ENCODE measurements at regions of chr15 and their contacts with region 1.

Region 1: DNA sequence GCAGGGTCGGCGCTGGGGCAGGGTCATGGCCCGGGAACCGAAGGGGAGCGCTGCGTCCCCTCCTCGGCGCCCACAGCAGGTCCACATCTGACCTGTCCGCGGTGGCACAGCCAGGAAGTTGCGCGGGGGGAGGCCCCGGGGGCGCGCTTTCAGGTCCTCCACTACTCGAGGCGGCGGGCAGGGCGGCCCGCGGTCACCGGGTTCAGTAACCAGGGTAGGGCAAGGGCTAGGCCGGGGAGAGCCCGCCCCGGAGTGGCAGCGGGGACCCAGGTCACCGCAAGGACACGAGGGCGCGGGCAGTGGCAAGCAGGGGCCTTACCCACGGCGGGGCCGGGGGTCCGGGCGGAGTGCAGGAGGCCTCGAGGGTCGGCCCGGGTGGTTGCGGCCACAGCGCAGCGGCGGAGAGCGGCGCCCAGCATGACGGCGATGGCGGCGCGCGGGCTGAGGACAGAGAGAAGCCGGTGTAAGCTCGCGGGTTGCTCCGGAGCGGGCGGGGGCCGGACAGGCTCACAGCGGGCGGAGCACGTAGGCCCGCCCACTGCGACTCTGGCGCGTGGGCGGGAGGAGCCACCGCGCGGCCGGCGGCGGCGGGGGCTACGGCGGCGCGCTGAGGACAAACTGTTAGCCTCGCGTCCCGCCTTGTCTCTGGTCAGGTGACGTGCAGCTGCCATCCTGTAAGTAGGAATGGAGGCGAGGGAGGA is at the start of gene COX5A:
- DNase-seq: peak; percentile 97
- ATAC-seq: peak; percentile 95
- H3K4me3 ChIP-seq: peak within 1 kb of the TSS; percentile 81 to 92 (median 85)
- H3K4me3 Mint-ChIP-seq: peak within 1 kb of the TSS; percentile 97
- H3K27ac ChIP-seq: peak within 1 kb of the TSS; percentile 67 to 89
- H3K27ac Mint-ChIP-seq: peak within 1 kb of the TSS; percentile 95
- H3K4me1 ChIP-seq: peaks cover 9 to 13% of the 10 kb centered on the region in 2 donors
- H3K4me1 Mint-ChIP-seq: peaks cover 24% of the 10 kb centered on the region
- H3K27me3 ChIP-seq: no peaks in the 10 kb centered on the region
- H3K27me3 Mint-ChIP-seq: no peaks in the 10 kb centered on the region
- CTCF ChIP-seq: no peak
- total RNA-seq, gene COX5A: 53.3 and 63.9 TPM in 2 replicates

Region 2: DNA sequence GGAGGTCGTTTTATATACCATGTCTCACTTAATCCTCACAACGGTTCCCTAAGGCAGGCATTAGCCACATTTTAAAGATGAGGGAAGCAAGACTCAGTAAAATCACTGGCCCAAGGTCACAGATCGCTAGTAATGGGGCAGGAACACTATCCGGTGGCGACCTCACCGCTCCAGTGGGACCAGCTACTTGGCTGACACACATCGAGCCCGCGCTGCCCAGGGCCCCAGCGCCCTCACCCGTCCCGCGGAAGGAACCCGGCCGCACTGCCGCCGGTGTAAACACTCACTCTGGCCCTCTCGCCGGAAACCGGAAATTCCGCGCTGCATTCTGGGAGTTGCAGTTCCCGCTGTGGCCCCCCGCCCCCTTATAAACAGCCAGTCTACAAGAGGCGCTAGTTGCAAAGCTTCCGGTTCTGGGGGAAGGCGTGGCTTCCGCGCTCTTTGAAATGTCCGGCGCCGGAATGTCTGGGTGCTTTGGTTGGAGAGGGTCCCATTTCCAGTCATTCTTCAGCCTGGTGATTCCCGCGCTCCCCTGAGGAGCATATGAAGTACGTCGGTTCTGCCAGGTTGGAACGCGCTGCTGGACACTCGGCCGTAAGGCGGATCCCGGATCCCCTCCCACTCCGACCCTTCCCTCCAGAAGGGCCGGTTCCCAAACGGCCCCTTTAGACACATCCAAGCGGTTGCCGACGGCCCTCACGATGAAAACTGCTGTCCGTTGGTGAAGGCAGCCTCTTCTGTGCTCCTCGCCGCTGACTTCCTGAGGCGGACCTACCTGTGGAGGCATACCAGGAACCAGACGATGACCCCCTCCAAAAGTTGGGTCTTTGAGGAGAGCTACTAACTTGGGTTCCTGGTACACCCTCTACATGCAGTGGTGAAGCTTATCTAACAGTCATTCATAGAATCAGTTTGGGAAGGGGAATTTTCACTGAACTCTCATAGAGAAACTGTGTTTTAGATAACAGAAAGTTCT is 476.6 kb before region 1 on chr15 and contains the start of gene UBL7:
- CTCF ChIA-PET with region 1: no interaction called
- POLR2A ChIA-PET with region 1: no interaction called
- intact Hi-C with region 1: loop called (anchors 2 kb)
- DNase-seq: peak; percentile 96
- ATAC-seq: peak; percentile 95
- H3K4me3 ChIP-seq: peak within 1 kb of the TSS; percentile 78 to 99 (median 90)
- H3K4me3 Mint-ChIP-seq: peak within 1 kb of the TSS; percentile 92
- H3K27ac ChIP-seq: peak within 1 kb of the TSS; percentile 77 to 80
- H3K27ac Mint-ChIP-seq: peak within 1 kb of the TSS; percentile 76
- H3K4me1 ChIP-seq: peaks cover 30 to 40% of the 10 kb centered on the region in 2 donors
- H3K4me1 Mint-ChIP-seq: peaks cover 39% of the 10 kb centered on the region
- H3K27me3 ChIP-seq: no peaks in the 10 kb centered on the region
- H3K27me3 Mint-ChIP-seq: no peaks in the 10 kb centered on the region
- CTCF ChIP-seq: no peak
- total RNA-seq, gene UBL7: 44.4 and 50.1 TPM in 2 replicates

Region 3: DNA sequence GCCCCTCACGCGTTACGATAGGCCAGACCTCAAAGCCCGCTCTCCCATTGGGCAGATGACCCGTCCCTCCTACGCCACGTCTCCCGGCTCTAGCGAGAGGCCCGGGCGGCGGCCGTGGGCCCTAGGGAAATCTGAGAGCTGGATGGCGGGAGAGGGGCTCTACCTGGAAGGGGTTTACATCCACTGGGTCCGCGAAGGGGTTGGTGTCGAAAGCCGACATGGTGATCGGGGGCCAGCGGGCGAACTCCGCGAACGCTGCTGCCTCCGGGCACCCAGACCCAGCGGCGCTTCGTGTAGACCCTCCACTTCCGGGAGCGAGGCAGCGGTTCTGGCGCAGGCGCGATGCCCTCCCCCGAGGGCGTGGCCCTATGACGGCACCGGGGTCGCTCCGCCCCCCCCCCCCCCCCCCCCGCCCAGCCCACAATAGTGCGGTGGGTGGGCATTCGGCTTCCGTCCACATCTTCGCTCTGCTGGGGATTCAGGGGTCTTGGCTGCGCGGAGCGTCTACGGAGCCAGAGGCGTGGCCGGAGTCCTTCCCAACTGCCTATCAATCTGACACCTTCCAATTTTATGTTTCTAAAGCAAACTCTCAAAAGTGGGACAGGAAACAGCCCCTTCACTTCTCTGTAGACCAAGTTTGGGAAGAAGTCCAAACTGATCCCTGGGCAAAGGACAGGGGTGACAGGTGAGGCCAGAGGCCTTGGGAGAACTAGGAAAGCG is 64.5 kb before region 1 on chr15 and contains the start of gene SCAMP2:
- CTCF ChIA-PET with region 1: no interaction called
- POLR2A ChIA-PET with region 1: no interaction called
- intact Hi-C with region 1: loop called (anchors 1 kb)
- DNase-seq: peak; percentile 96
- ATAC-seq: peak; percentile 96
- H3K4me3 ChIP-seq: peak within 1 kb of the TSS; percentile 64 to 91 (median 83)
- H3K4me3 Mint-ChIP-seq: peak within 1 kb of the TSS; percentile 95
- H3K27ac ChIP-seq: peak within 1 kb of the TSS; percentile 94 to 95
- H3K27ac Mint-ChIP-seq: peak within 1 kb of the TSS; percentile 98
- H3K4me1 ChIP-seq: peaks cover 37 to 52% of the 10 kb centered on the region in 2 donors
- H3K4me1 Mint-ChIP-seq: peaks cover 42% of the 10 kb centered on the region
- H3K27me3 ChIP-seq: no peaks in the 10 kb centered on the region
- H3K27me3 Mint-ChIP-seq: no peaks in the 10 kb centered on the region
- CTCF ChIP-seq: no peak
- total RNA-seq, gene SCAMP2: 105 and 111 TPM in 2 replicates

Region 4: DNA sequence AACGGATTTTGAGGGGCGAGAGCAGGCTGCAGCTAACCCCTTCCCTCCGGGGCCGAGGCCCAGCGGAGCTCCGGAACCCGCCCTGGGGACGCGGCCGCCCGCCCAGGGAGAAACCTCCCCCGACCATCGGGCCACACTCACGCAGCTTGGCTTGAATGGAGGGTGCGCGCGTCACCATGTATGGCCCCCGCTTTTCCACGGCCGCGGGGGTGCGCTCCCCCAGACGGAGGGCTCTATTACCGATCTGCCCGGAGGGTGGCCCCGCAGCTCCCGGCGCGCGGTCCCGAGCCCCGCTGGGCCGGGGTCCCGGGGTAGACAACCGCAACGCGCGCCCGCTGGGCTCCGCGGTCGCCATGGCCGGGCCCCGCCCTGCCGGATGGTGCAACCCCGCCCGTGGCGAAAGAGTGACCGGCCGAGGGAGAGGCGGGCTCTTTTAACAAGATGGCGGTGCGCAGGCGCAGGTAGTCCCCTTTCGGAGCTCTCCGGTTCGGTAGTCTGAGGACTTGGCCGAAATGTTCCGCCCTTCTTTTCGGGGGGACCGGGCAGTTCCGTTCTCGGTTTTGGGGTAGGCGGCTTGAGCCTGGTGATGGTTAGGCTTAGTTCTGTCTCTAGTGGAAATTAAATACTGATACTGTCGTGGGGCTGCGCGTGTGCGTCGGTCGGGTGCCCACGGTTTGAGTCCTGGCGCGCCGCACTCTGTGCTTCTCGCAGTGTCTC is 31.1 kb before region 1 on chr15 and contains the start of gene FAM219B:
- CTCF ChIA-PET with region 1: interaction called, 7 read pairs
- POLR2A ChIA-PET with region 1: interaction called, 4 read pairs
- intact Hi-C with region 1: loop called (anchors 1 kb)
- DNase-seq: peak; percentile 86
- ATAC-seq: peak; percentile 90
- H3K4me3 ChIP-seq: peak within 1 kb of the TSS; percentile 73 to 89 (median 85)
- H3K4me3 Mint-ChIP-seq: peak within 1 kb of the TSS; percentile 98
- H3K27ac ChIP-seq: peak within 1 kb of the TSS; percentile 48 to 79
- H3K27ac Mint-ChIP-seq: peak within 1 kb of the TSS; percentile 98
- H3K4me1 ChIP-seq: peaks cover 19 to 23% of the 10 kb centered on the region in 2 donors
- H3K4me1 Mint-ChIP-seq: peaks cover 45% of the 10 kb centered on the region
- H3K27me3 ChIP-seq: no peaks in the 10 kb centered on the region
- H3K27me3 Mint-ChIP-seq: no peaks in the 10 kb centered on the region
- CTCF ChIP-seq: no peak
- total RNA-seq, gene FAM219B: 109 and 135 TPM in 2 replicates

Region 5: GRCh38 chr15:74956648-74957300 is 19.0 kb after region 1 on chr15 and contains the start of gene RPP25:
- CTCF ChIA-PET with region 1: interaction called, 16 read pairs
- POLR2A ChIA-PET with region 1: interaction called, 7 read pairs
- intact Hi-C with region 1: loop called (anchors 1 kb)
- DNase-seq: peak; percentile 84
- ATAC-seq: peak; percentile 91
- H3K4me3 ChIP-seq: peak within 1 kb of the TSS; percentile 39 to 80 (median 53)
- H3K4me3 Mint-ChIP-seq: peak within 1 kb of the TSS; percentile 85
- H3K27ac ChIP-seq: no peak within 1 kb of the TSS
- H3K27ac Mint-ChIP-seq: no peak within 1 kb of the TSS
- H3K4me1 ChIP-seq: peaks cover 38 to 40% of the 10 kb centered on the region in 2 donors
- H3K4me1 Mint-ChIP-seq: peaks cover 30% of the 10 kb centered on the region
- H3K27me3 ChIP-seq: peaks cover 0 to 64% (median 37%) of the 10 kb centered on the region in 4 experiments
- H3K27me3 Mint-ChIP-seq: peaks cover 43% of the 10 kb centered on the region
- CTCF ChIP-seq: no peak
- total RNA-seq, gene RPP25: 3.1 and 4.4 TPM in 2 replicates

Region 6: DNA sequence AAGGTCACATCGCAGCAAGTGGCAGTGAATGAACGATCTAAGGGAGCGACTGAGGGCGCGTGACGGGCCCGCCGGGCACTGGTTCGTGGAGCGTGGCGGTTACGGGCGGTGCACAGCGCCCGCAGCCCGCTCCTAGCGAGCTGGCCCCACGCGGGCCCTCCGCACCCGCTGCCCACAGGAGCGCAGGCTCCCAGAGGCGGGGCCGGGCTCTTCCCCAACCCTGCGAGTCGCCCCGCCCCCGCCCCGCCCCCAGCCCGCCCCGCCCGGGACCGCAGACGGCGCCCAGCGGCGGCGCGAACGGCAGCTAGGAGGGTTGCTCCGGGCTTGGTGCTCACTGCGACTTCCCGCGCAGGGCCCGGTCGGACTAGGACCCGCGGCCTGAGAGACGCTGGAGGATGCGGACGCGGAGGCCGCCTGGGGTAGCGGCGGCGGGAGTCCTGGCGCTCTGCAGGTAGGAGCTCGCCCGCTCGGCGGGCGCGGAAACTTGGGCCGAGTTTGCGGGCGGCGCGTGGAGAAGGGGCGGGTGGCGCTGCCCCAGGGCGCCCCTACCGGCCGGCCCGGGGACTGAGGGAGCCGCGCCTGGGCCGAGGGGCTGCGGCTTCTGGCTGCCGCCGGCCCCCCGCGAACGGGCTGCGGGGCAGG is 264.0 kb after region 1 on chr15 and contains the start of gene C15orf39:
- CTCF ChIA-PET with region 1: no interaction called
- POLR2A ChIA-PET with region 1: no interaction called
- intact Hi-C with region 1: loop called (anchors 5 kb)
- DNase-seq: peak; percentile 89
- ATAC-seq: peak; percentile 59
- H3K4me3 ChIP-seq: peak within 1 kb of the TSS; percentile 53 to 77 (median 73)
- H3K4me3 Mint-ChIP-seq: peak within 1 kb of the TSS; percentile 98
- H3K27ac ChIP-seq: peak within 1 kb of the TSS; percentile 59 to 86
- H3K27ac Mint-ChIP-seq: peak within 1 kb of the TSS; percentile 96
- H3K4me1 ChIP-seq: peaks cover 24 to 51% of the 10 kb centered on the region in 2 donors
- H3K4me1 Mint-ChIP-seq: peaks cover 41% of the 10 kb centered on the region
- H3K27me3 ChIP-seq: peaks cover 0 to 19% (median 5%) of the 10 kb centered on the region in 4 experiments
- H3K27me3 Mint-ChIP-seq: no peaks in the 10 kb centered on the region
- CTCF ChIP-seq: peak; percentile 97
- total RNA-seq, gene C15orf39: 72.1 and 72.7 TPM in 2 replicates

Region 7: DNA sequence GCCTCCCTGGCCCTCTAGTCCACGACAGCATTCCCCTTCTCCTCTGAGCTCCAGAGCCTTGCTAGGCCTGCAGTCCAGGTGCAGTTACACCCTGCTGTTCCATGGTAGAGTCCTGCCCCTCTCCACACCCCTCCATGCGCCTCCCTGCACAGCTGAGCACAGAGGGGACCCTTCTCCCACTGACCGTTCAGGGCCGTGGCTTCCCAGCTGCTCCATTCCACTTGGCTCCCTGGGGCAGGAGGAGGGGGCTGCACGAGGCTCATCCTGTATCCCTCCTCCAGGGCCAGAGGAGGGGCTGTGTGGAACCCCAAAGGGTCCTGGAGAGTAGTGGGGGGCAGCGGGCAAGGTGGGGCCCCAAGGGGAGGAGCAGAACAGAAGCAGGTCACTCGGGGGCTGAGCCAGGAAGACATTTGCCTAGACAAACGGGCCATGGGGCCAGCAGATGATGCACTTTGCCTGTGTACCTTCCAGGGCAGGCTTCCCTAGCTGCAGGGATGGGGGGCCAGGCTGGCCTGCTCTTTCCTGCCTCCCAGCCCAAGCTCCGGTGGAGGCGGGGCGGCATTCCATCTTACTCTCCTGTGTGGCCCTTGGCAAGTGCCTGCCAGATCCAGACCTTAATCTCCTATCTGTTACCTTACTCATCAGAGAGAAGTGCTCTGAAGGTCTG is 299.7 kb after region 1 on chr15:
- CTCF ChIA-PET with region 1: no interaction called
- POLR2A ChIA-PET with region 1: no interaction called
- intact Hi-C with region 1: no loop called
- DNase-seq: no peak
- ATAC-seq: no peak
- H3K4me3 ChIP-seq: no peak overlapping the region
- H3K4me3 Mint-ChIP-seq: no peak overlapping the region
- H3K27ac ChIP-seq: no peak overlapping the region
- H3K27ac Mint-ChIP-seq: no peak overlapping the region
- H3K4me1 ChIP-seq: no peaks in the 10 kb centered on the region
- H3K4me1 Mint-ChIP-seq: no peaks in the 10 kb centered on the region
- H3K27me3 ChIP-seq: peaks cover 0 to 14% (median 1%) of the 10 kb centered on the region in 4 experiments
- H3K27me3 Mint-ChIP-seq: peaks cover 24% of the 10 kb centered on the region
- CTCF ChIP-seq: no peak

Region 8: DNA sequence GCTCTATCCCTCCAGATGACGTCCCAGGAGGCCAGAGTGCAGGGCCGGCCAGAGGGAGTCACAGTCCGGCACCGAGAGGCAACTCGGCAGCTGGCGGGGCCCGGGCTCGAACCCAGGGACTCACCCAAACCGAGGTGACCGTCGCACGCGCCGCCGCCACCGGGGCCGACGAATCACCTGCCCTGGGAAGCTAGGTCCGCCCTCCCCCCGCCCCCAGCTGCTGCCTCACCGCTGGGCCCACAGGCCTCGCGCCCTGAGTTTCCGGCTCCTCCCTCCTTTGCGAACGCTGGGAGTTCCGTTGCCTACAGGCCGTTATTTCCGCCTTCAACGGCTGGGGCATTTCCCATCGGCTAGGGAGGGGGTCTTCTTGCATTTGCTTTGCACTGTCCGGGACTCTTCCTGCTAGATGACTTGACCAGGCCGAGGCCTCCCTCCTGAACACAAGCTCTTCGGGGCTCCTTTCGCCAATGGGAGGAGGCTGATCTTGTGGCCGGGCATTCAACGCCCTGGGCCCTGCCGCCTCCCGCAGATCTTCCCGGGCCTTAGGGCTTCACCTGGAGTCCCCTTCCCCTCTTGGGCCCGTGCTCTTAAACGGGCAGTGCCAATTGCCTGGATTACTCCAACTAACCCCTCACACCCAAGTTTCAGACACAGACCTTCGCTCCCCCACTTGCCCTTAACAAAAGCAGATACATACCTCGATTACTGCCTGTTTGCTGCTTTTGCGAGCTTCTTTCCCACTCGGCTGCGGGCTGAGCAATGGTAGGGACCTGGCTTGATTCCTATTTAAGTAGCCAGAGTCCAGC is 688.0 kb after region 1 on chr15 and contains the start of gene SNUPN:
- CTCF ChIA-PET with region 1: interaction called, 3 read pairs
- POLR2A ChIA-PET with region 1: no interaction called
- intact Hi-C with region 1: loop called (anchors 5 kb)
- DNase-seq: peak; percentile 96
- ATAC-seq: peak; percentile 91
- H3K4me3 ChIP-seq: peak within 1 kb of the TSS; percentile 72 to 97 (median 93)
- H3K4me3 Mint-ChIP-seq: peak within 1 kb of the TSS; percentile 91
- H3K27ac ChIP-seq: peak within 1 kb of the TSS; percentile 91 to 97
- H3K27ac Mint-ChIP-seq: peak within 1 kb of the TSS; percentile 95
- H3K4me1 ChIP-seq: peaks cover 7 to 12% of the 10 kb centered on the region in 2 donors
- H3K4me1 Mint-ChIP-seq: peaks cover 13% of the 10 kb centered on the region
- H3K27me3 ChIP-seq: no peaks in the 10 kb centered on the region
- H3K27me3 Mint-ChIP-seq: no peaks in the 10 kb centered on the region
- CTCF ChIP-seq: no peak
- total RNA-seq, gene SNUPN: 19.6 and 23.5 TPM in 2 replicates